Naive thymus-derived CD4-positive, alpha-beta T cell (primary cell): ENCODE measurements at regions of chr10 and their contacts with region 1.

Region 1: GRCh38 chr10:7410862-7411670 is at the start of gene SFMBT2:
- DNase-seq: peak; percentile 45 to 71 (median 64)
- ATAC-seq: peak; percentile 61
- H3K4me3 ChIP-seq: peak within 1 kb of the TSS; percentile 92
- H3K4me3 Mint-ChIP-seq: peak within 1 kb of the TSS; percentile 93 to 100 (median 99)
- H3K27ac ChIP-seq: peak within 1 kb of the TSS; percentile 76
- H3K27ac Mint-ChIP-seq: peak within 1 kb of the TSS; percentile 93 to 99 (median 95)
- H3K4me1 ChIP-seq: peaks cover 18 to 28% of the 10 kb centered on the region in 2 donors
- H3K4me1 Mint-ChIP-seq: peaks cover 14 to 49% (median 37%) of the 10 kb centered on the region in 7 donors
- H3K27me3 ChIP-seq: no peaks in the 10 kb centered on the region
- H3K27me3 Mint-ChIP-seq: peaks cover 0 to 34% (median 0%) of the 10 kb centered on the region in 5 donors
- total RNA-seq, gene SFMBT2: 38.6 to 50.9 (median 40.9) TPM

Region 2: GRCh38 chr10:6580279-6581029 is 830.6 kb before region 1 on chr10:
- CTCF ChIA-PET with region 1: no interaction called
- POLR2A ChIA-PET with region 1: no interaction called
- intact Hi-C with region 1: loop called in 1 of 2 experiments (anchors 5 kb)
- DNase-seq: peak; percentile 74 to 95 (median 84)
- ATAC-seq: peak; percentile 92
- H3K4me3 ChIP-seq: peak overlapping the region; percentile 88
- H3K4me3 Mint-ChIP-seq: peak overlapping the region; percentile 86 to 99 (median 93)
- H3K27ac ChIP-seq: peak overlapping the region; percentile 94
- H3K27ac Mint-ChIP-seq: peak overlapping the region; percentile 94 to 99 (median 98)
- H3K4me1 ChIP-seq: peaks cover 33 to 42% of the 10 kb centered on the region in 2 donors
- H3K4me1 Mint-ChIP-seq: peaks cover 35 to 67% (median 56%) of the 10 kb centered on the region in 7 donors
- H3K27me3 ChIP-seq: no peaks in the 10 kb centered on the region
- H3K27me3 Mint-ChIP-seq: no peaks in the 10 kb centered on the region

Region 3: DNA sequence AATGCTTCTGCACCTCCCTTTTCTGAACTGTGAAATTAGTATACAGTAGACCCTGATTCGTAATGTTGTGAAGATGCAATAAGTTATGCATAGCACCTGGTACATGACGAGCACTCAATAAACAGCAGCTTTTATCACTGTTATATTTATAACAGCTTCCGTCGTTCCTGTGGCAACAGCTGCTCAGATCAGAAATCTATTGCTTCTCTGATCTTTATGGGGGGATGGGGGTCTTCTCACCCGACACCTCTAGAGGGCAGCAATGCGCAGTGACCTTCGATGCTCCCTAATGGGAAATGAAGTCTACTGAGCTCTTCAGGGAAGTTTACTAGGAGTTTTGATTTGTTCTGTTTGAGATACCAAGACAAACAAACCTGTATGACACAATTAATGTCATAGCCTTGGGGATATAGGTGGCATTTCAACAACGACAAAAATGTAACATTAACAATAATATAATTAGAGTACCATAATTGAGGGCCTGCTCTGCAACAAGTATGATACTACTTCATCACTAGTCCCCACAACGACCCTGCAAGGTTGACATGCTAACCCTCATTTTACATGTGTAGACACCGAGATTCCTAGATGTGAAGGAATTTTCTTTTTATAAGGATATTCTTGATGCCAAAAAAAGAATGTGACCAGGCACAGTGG is 289.8 kb before region 1 on chr10:
- CTCF ChIA-PET with region 1: interaction called, 22 read pairs
- POLR2A ChIA-PET with region 1: interaction called, 4 read pairs
- intact Hi-C with region 1: loop called (anchors 1 kb)
- DNase-seq: peak; percentile 54 to 86 (median 79)
- ATAC-seq: peak; percentile 97
- H3K4me3 ChIP-seq: no peak overlapping the region
- H3K4me3 Mint-ChIP-seq: peak overlapping the region in 1 of 10 donors; percentile 42
- H3K27ac ChIP-seq: no peak overlapping the region
- H3K27ac Mint-ChIP-seq: peak overlapping the region; percentile 36 to 97 (median 85)
- H3K4me1 ChIP-seq: no peaks in the 10 kb centered on the region
- H3K4me1 Mint-ChIP-seq: peaks cover 6 to 13% (median 8%) of the 10 kb centered on the region in 7 donors
- H3K27me3 ChIP-seq: no peaks in the 10 kb centered on the region
- H3K27me3 Mint-ChIP-seq: peaks cover 0 to 44% (median 0%) of the 10 kb centered on the region in 5 donors

Region 4: GRCh38 chr10:7265396-7266123 is 145.5 kb before region 1 on chr10:
- CTCF ChIA-PET with region 1: no interaction called
- POLR2A ChIA-PET with region 1: no interaction called
- intact Hi-C with region 1: loop called (anchors 1 kb)
- DNase-seq: no peak
- ATAC-seq: no peak
- H3K4me3 ChIP-seq: no peak overlapping the region
- H3K4me3 Mint-ChIP-seq: no peak overlapping the region
- H3K27ac ChIP-seq: no peak overlapping the region
- H3K27ac Mint-ChIP-seq: peak overlapping the region in 5 of 9 donors; percentile 36 to 84 (median 76)
- H3K4me1 ChIP-seq: peaks cover 6 to 13% of the 10 kb centered on the region in 2 donors
- H3K4me1 Mint-ChIP-seq: peaks cover 16 to 52% (median 38%) of the 10 kb centered on the region in 7 donors
- H3K27me3 ChIP-seq: no peaks in the 10 kb centered on the region
- H3K27me3 Mint-ChIP-seq: no peaks in the 10 kb centered on the region

Region 5: GRCh38 chr10:7329219-7329618 is 81.8 kb before region 1 on chr10:
- CTCF ChIA-PET with region 1: no interaction called
- POLR2A ChIA-PET with region 1: no interaction called
- intact Hi-C with region 1: no loop called
- DNase-seq: no peak
- ATAC-seq: no peak
- H3K4me3 ChIP-seq: no peak overlapping the region
- H3K4me3 Mint-ChIP-seq: peak overlapping the region in 1 of 10 donors; percentile 3
- H3K27ac ChIP-seq: no peak overlapping the region
- H3K27ac Mint-ChIP-seq: no peak overlapping the region
- H3K4me1 ChIP-seq: no peaks in the 10 kb centered on the region
- H3K4me1 Mint-ChIP-seq: peaks cover 4 to 45% (median 29%) of the 10 kb centered on the region in 7 donors
- H3K27me3 ChIP-seq: no peaks in the 10 kb centered on the region
- H3K27me3 Mint-ChIP-seq: no peaks in the 10 kb centered on the region

Region 6: DNA sequence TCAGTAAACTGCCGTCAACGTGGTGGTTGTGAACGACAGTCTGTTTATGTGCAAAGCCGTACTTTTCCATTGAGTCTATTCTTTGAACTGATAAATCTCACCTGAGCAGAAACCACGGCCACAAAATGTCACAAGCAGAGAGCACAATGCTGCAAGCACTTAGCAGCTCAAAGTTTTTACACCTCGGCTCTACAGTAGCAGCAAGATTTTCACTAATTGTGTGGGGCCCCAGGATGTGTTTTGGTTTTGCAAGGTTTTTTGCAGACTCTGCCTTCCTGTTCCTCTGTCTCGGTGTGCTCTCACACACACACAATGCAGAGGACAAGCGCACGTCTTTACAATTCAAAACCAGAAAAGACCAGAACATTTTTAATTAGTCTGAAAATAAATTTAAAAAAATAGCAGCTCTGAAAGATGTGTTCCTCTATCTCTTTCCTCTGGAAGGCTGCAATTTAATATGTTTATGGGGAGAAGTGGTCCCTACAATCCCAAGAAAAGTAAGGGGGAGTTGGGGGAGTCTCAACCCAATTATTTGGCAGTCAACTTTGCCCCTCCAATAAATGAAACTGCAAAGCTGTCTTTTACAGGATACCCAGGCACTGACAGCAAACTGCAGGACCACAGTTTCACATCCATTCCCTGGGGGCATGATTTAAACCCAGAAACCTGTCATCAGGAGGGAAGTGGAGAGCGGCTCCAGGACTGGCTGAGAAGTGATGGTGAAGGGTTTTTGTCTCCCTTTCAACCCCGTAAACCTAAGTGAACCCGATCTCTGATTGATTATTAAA is 73.6 kb after region 1 on chr10:
- CTCF ChIA-PET with region 1: no interaction called
- POLR2A ChIA-PET with region 1: interaction called, 21 read pairs
- intact Hi-C with region 1: loop called (anchors 1 to 2 kb)
- DNase-seq: peak in 8 of 9 donors; percentile 49 to 89 (median 82)
- ATAC-seq: peak; percentile 92
- H3K4me3 ChIP-seq: peak overlapping the region; percentile 34
- H3K4me3 Mint-ChIP-seq: peak overlapping the region; percentile 54 to 85 (median 78)
- H3K27ac ChIP-seq: peak overlapping the region; percentile 73
- H3K27ac Mint-ChIP-seq: peak overlapping the region; percentile 93 to 100 (median 99)
- H3K4me1 ChIP-seq: peaks cover 63 to 75% of the 10 kb centered on the region in 2 donors
- H3K4me1 Mint-ChIP-seq: peaks cover 67 to 96% (median 94%) of the 10 kb centered on the region in 7 donors
- H3K27me3 ChIP-seq: no peaks in the 10 kb centered on the region
- H3K27me3 Mint-ChIP-seq: no peaks in the 10 kb centered on the region

Region 7: GRCh38 chr10:7787857-7788638 is 377.0 kb after region 1 on chr10 and contains the starts of genes ATP5F1C and KIN:
- CTCF ChIA-PET with region 1: no interaction called
- POLR2A ChIA-PET with region 1: interaction called, 3 read pairs
- intact Hi-C with region 1: loop called in 1 of 2 experiments (anchors 2 kb)
- DNase-seq: peak; percentile 93 to 98 (median 96)
- ATAC-seq: peak; percentile 98
- H3K4me3 ChIP-seq: peak within 1 kb of the TSS; percentile 79
- H3K4me3 Mint-ChIP-seq: no peak within 1 kb of the TSS
- H3K27ac ChIP-seq: peak within 1 kb of the TSS; percentile 84
- H3K27ac Mint-ChIP-seq: peak within 1 kb of the TSS in 1 of 9 donors; percentile 90
- H3K4me1 ChIP-seq: peaks cover 21 to 28% of the 10 kb centered on the region in 2 donors
- H3K4me1 Mint-ChIP-seq: peaks cover 47 to 77% (median 57%) of the 10 kb centered on the region in 7 donors
- H3K27me3 ChIP-seq: no peaks in the 10 kb centered on the region
- H3K27me3 Mint-ChIP-seq: no peaks in the 10 kb centered on the region
- total RNA-seq, gene ATP5F1C: 113 to 290 (median 122) TPM
- total RNA-seq, gene KIN: 7.2 to 18.4 (median 14.3) TPM